ENCODE measurements at regions of chr9 and their contacts with region 1.

Region 1: DNA sequence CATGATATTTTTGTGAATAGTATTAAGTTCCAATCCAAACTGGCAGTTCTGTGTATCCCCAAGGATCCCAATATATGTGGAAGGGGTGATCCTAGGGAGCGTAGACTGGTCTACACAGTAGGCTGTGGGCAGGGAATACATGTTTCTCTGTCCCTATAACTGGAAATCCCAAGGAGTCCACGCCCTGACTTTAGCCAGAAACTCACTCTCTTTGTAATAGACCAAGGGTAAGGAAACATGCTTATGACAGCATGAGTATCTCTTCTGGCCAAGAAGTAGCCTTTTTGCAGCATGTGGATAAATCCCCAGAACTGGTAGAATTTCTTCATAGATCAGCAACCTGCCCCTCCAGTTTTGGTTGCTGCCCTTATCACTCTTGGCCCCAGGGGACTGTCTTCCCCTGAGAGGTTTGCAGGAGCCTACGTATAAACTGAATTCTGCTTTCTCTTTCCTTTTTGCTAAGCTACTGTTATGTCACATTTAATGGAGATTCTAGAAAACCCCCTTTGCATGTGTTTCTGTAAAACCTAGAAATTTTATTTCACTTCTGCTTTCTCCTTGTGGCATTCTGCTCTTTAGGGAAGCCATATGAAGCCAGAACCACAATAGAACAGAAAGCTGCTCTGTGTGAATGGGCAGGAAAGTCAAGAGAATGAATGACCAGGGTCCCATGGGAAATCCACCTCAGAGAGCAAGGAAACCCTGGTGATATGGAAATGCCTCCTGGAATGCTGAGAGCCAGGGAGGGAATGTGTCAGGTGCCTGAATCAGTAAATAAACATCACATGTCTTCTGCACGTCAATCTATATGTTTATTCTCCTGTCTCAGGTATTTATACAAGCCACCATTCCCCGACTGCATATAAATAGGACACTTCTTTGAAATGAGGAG is 3.5 kb downstream of the IFNA2 start:
- DNase-seq: peak; percentile 91
- ATAC-seq: peak; percentile 97
- H3K4me3 ChIP-seq: peak overlapping the region in 2 of 5 experiments; percentile 16 to 34
- H3K4me3 Mint-ChIP-seq: peak overlapping the region; percentile 0
- H3K27ac ChIP-seq: no peak overlapping the region
- H3K27ac Mint-ChIP-seq: peak overlapping the region; percentile 28
- H3K4me1 ChIP-seq: peaks cover 20 to 25% of the 10 kb centered on the region in 2 donors
- H3K4me1 Mint-ChIP-seq: peaks cover 33% of the 10 kb centered on the region
- H3K27me3 ChIP-seq: peaks cover 0 to 24% (median 13%) of the 10 kb centered on the region in 4 experiments
- H3K27me3 Mint-ChIP-seq: peaks cover 23% of the 10 kb centered on the region
- CTCF ChIP-seq: no peak

Region 2: GRCh38 chr9:21362287-21362686 is 19.4 kb before region 1 on chr9:
- CTCF ChIA-PET with region 1: no interaction called
- POLR2A ChIA-PET with region 1: no interaction called
- intact Hi-C with region 1: loop called (anchors 1 kb)
- DNase-seq: no peak
- ATAC-seq: no peak
- H3K4me3 ChIP-seq: no peak overlapping the region
- H3K4me3 Mint-ChIP-seq: no peak overlapping the region
- H3K27ac ChIP-seq: no peak overlapping the region
- H3K27ac Mint-ChIP-seq: no peak overlapping the region
- H3K4me1 ChIP-seq: peaks cover 8 to 9% of the 10 kb centered on the region in 2 donors
- H3K4me1 Mint-ChIP-seq: peaks cover 12% of the 10 kb centered on the region
- H3K27me3 ChIP-seq: peaks cover 0 to 8% (median 2%) of the 10 kb centered on the region in 4 experiments
- H3K27me3 Mint-ChIP-seq: peaks cover 26% of the 10 kb centered on the region
- CTCF ChIP-seq: no peak

Region 3: GRCh38 chr9:21413624-21414023 is 31.9 kb after region 1 on chr9:
- CTCF ChIA-PET with region 1: no interaction called
- POLR2A ChIA-PET with region 1: no interaction called
- intact Hi-C with region 1: loop called (anchors 1 kb)
- DNase-seq: no peak
- ATAC-seq: no peak
- H3K4me3 ChIP-seq: no peak overlapping the region
- H3K4me3 Mint-ChIP-seq: no peak overlapping the region
- H3K27ac ChIP-seq: no peak overlapping the region
- H3K27ac Mint-ChIP-seq: no peak overlapping the region
- H3K4me1 ChIP-seq: peaks cover 21 to 30% of the 10 kb centered on the region in 2 donors
- H3K4me1 Mint-ChIP-seq: peaks cover 29% of the 10 kb centered on the region
- H3K27me3 ChIP-seq: peaks cover 0 to 36% (median 18%) of the 10 kb centered on the region in 4 experiments
- H3K27me3 Mint-ChIP-seq: peaks cover 50% of the 10 kb centered on the region
- CTCF ChIP-seq: no peak

Region 4: GRCh38 chr9:21802195-21803000 is 420.7 kb after region 1 on chr9 and contains the start of gene MTAP:
- CTCF ChIA-PET with region 1: no interaction called
- POLR2A ChIA-PET with region 1: no interaction called
- intact Hi-C with region 1: loop called (anchors 5 kb)
- DNase-seq: peak; percentile 80
- ATAC-seq: peak; percentile 88
- H3K4me3 ChIP-seq: peak within 1 kb of the TSS; percentile 68 to 94 (median 84)
- H3K4me3 Mint-ChIP-seq: peak within 1 kb of the TSS; percentile 99
- H3K27ac ChIP-seq: peak within 1 kb of the TSS; percentile 24 to 71
- H3K27ac Mint-ChIP-seq: peak within 1 kb of the TSS; percentile 83
- H3K4me1 ChIP-seq: peaks cover 24 to 25% of the 10 kb centered on the region in 2 donors
- H3K4me1 Mint-ChIP-seq: peaks cover 48% of the 10 kb centered on the region
- H3K27me3 ChIP-seq: peaks cover 0 to 9% (median 2%) of the 10 kb centered on the region in 4 experiments
- H3K27me3 Mint-ChIP-seq: peaks cover 13% of the 10 kb centered on the region
- CTCF ChIP-seq: no peak
- total RNA-seq, gene MTAP: 28.8 and 38.4 TPM in 2 replicates

Region 5: DNA sequence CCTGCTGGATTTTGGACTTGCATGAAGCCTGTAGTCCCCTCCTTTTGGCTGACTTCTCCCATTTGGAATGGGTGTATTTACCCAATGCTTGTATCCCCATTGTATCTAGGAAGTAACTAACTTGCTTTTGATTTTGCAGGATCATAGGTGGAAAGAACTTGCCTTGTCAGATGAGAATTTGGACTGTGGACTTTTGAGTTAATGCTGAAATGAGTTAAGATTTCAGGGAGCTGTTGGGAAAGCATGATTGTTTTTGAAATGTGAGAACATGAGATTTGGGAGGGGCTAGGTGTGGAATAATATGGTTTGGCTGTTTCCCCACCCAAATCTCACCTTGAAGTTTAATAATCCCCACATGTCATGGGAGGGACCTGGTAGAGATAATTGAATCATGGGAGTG is 817.0 kb after region 1 on chr9:
- CTCF ChIA-PET with region 1: no interaction called
- POLR2A ChIA-PET with region 1: no interaction called
- intact Hi-C with region 1: loop called (anchors 5 kb)
- DNase-seq: no peak
- ATAC-seq: no peak
- H3K4me3 ChIP-seq: peak overlapping the region in 1 of 5 experiments; percentile 21
- H3K4me3 Mint-ChIP-seq: peak overlapping the region; percentile 6
- H3K27ac ChIP-seq: no peak overlapping the region
- H3K27ac Mint-ChIP-seq: no peak overlapping the region
- H3K4me1 ChIP-seq: peaks cover 38 to 43% of the 10 kb centered on the region in 2 donors
- H3K4me1 Mint-ChIP-seq: peaks cover 55% of the 10 kb centered on the region
- H3K27me3 ChIP-seq: no peaks in the 10 kb centered on the region
- H3K27me3 Mint-ChIP-seq: no peaks in the 10 kb centered on the region
- CTCF ChIP-seq: no peak

Measured in B cell (primary cell).